AG04450 (cell line): ENCODE measurements at regions of chr4 and their contacts with region 1.

Region 1: DNA sequence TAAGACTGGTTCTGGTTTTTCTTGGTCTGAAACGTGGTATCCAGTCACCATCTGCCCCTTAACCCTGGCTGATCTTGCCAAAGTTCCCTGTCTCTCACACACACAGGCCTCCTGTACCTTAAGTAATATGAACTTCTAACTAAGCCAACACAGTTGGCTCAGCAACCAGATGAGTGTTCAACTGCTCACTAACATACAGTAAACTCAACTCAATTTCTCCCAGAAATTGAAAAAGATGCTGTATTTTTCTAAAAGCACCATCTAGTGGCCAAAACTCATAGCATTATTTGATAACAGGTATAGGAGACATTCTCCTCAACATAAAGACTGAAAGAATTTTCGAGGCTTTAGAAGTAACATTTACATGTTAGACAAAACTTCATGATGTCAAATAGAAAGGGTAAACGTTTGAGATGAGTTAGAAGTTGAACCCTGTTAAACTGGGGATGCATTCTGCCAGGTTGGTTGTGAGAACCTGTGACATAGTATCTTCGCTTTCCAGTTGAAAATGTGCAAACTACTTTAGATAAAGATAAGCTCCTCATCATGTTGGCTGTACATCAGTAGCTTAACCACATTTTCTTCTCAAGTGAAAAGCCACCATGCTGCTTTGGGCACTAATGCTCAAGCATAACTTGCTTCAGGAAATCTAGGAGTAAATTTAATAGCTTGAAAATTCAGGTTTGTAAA is 31.2 kb downstream of the CCNI start:
- DNase-seq: no peak
- H3K4me3 ChIP-seq: no peak overlapping the region
- H3K27ac ChIP-seq: no peak overlapping the region
- H3K27me3 ChIP-seq: no peaks in the 10 kb centered on the region
- CTCF ChIP-seq: peak; percentile 69

Region 2: GRCh38 chr4:77007358-77008191 is 37.0 kb before region 1 on chr4:
- CTCF ChIA-PET with region 1: interaction called, 14 read pairs
- POLR2A ChIA-PET with region 1: no interaction called
- DNase-seq: no peak
- H3K4me3 ChIP-seq: no peak overlapping the region
- H3K27ac ChIP-seq: peak overlapping the region; percentile 69
- H3K27me3 ChIP-seq: no peaks in the 10 kb centered on the region
- CTCF ChIP-seq: no peak

Region 3: GRCh38 chr4:77065382-77065781 is 20.8 kb after region 1 on chr4:
- CTCF ChIA-PET with region 1: interaction called, 18 read pairs
- POLR2A ChIA-PET with region 1: no interaction called
- DNase-seq: no peak
- H3K4me3 ChIP-seq: no peak overlapping the region
- H3K27ac ChIP-seq: peak overlapping the region; percentile 54
- H3K27me3 ChIP-seq: no peaks in the 10 kb centered on the region
- CTCF ChIP-seq: no peak

Region 4: GRCh38 chr4:77145842-77146185 is 101.2 kb after region 1 on chr4:
- CTCF ChIA-PET with region 1: no interaction called
- POLR2A ChIA-PET with region 1: no interaction called
- DNase-seq: no peak
- H3K4me3 ChIP-seq: no peak overlapping the region
- H3K27ac ChIP-seq: no peak overlapping the region
- H3K27me3 ChIP-seq: peaks cover 8% of the 10 kb centered on the region
- CTCF ChIP-seq: no peak